Left colon (tissue), 2 donors: ENCODE measurements at regions of chr4 and their contacts with region 1.

Region 1: GRCh38 chr4:142840516-142841123 is 5.5 kb downstream of the INPP4B start:
- DNase-seq: no peak
- ATAC-seq: no peak

Region 2: GRCh38 chr4:142353149-142353738 is 487.4 kb before region 1 on chr4:
- intact Hi-C with region 1: loop called in 1 of 2 experiments (anchors 5 kb)
- DNase-seq: no peak
- ATAC-seq: peak; percentile 35

Region 3: DNA sequence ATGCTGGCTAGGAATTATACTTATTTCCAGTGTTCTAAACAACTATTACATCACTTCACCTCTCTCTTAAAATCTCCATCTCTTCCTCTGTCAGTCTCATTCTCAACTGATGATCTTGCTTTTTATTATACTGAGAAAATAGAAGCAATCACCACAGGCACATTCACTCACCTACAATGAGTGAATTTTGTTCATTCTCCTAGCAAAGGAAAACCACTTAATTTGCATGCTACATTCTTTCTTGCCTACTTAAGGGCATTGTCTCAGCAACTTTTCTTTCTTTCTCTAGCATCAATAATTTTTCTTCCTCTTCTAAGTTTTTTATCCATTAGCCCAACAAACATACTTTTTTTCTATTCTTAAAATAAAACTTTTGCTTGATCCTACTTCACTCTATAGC is 323.0 kb after region 1 on chr4:
- intact Hi-C with region 1: no loop called
- DNase-seq: no peak
- ATAC-seq: no peak